ENCODE measurements at regions of chr18 and their contacts with region 1.

Region 1: DNA sequence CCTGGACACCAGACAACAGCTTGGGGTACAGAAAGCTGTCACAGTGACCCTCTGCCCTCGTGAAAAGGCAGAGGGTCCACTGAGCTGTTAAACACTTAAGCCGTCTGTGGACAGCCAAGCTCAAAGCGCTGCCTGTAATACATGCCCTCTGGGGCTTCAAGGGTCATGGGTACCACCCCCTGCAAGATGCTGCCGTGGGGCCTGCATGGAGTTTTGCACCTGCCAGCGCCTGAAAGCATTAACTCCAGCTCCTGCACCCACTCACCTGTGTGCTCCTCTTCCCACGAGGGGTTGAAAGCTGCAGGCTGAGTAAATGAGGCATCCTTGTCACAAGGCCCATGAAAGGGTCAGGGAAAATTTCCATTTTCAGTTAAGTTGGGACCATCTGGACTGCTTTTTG is 70.6 kb upstream of the PHLPP1 start:
- DNase-seq: no peak
- ATAC-seq: no peak
- H3K4me3 ChIP-seq: no peak overlapping the region
- H3K27ac ChIP-seq: no peak overlapping the region
- H3K4me1 ChIP-seq: no peaks in the 10 kb centered on the region
- H3K27me3 ChIP-seq: no peaks in the 10 kb centered on the region
- CTCF ChIP-seq: no peak

Region 2: DNA sequence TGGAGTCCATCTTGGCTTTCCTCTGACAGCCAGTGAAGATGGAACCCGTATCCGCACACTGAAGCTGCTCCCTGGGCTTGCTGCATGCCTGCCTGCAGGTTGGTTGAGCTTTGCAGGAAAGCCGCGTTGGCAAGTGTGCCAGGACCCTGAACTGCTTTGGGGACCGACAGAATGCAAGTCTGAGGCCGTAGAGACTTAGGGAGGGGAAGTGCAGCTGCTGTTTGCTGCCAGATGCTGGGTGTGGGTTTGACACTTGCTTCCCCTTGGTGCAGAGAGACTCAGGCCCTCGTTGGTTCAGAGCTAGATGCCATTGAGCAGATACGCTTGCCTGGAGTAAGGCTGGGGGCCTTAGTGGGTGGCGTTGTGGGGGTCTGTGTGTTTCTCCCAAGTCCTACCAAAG is 57.5 kb after region 1 on chr18:
- intact Hi-C with region 1: loop called in 1 of 2 experiments (anchors 10 kb)
- DNase-seq: no peak
- ATAC-seq: no peak
- H3K4me3 ChIP-seq: no peak overlapping the region
- H3K27ac ChIP-seq: no peak overlapping the region
- H3K4me1 ChIP-seq: no peaks in the 10 kb centered on the region
- H3K27me3 ChIP-seq: no peaks in the 10 kb centered on the region
- CTCF ChIP-seq: no peak

Region 3: DNA sequence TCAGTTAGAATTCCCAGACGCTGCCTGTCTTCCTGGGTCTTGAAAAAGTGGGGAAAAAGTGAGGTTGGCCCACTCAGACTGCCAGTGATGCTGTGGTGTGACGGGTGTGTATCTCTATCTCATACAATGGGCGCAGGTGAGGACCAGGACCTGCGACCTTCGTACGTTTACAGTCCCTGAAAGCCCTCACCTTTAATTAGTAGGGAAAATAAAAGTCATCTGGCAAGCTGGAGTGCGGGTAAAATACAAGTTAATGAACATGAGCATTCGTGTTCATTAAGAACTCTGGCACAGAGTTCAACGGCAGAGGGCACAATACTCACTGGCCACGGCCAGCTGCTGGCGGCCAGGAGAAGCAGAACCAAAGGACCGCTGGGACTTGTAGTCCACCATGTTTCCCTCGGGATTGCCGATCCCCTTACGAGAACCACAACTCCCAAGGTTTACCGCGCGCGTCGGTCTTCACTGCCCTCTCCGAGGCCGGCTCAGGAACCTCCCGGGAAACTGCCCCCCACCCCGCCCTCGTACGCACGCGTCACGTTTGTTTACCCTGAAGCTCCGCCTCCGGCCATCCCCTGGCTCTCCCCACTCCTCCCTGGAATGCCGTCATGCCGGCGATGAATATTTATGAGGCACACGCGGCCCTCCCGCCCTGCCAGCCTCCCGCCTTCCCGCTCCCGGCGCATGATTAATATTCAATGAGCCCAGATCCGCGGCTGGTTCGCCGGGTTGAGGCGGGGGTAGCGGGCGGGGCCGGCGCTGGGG is 70.1 kb after region 1 on chr18:
- intact Hi-C with region 1: no loop called
- DNase-seq: peak; percentile 100
- ATAC-seq: peak; percentile 96 to 99 (median 98)
- H3K4me3 ChIP-seq: peak overlapping the region; percentile 79
- H3K27ac ChIP-seq: peak overlapping the region; percentile 88
- H3K4me1 ChIP-seq: peaks cover 22% of the 10 kb centered on the region
- H3K27me3 ChIP-seq: no peaks in the 10 kb centered on the region
- CTCF ChIP-seq: peak; percentile 77

Region 4: GRCh38 chr18:63098018-63098981 is 453.5 kb after region 1 on chr18:
- intact Hi-C with region 1: loop called in 1 of 2 experiments (anchors 5 kb)
- DNase-seq: no peak
- ATAC-seq: no peak
- H3K4me3 ChIP-seq: no peak overlapping the region
- H3K27ac ChIP-seq: no peak overlapping the region
- H3K4me1 ChIP-seq: peaks cover 12% of the 10 kb centered on the region
- H3K27me3 ChIP-seq: no peaks in the 10 kb centered on the region
- CTCF ChIP-seq: no peak